ENCODE measurements at regions of chr3 and their contacts with region 1.

Region 1: GRCh38 chr3:150528354-150528797 is 17.9 kb downstream of the SERP1 start:
- DNase-seq: peak in 4 of 9 donors; percentile 23 to 37 (median 28)
- ATAC-seq: peak; percentile 42
- H3K4me3 ChIP-seq: no peak overlapping the region
- H3K4me3 Mint-ChIP-seq: no peak overlapping the region
- H3K27ac ChIP-seq: no peak overlapping the region
- H3K27ac Mint-ChIP-seq: no peak overlapping the region
- H3K4me1 ChIP-seq: no peaks in the 10 kb centered on the region
- H3K4me1 Mint-ChIP-seq: peaks cover 0 to 8% (median 5%) of the 10 kb centered on the region in 7 donors
- H3K27me3 ChIP-seq: no peaks in the 10 kb centered on the region
- H3K27me3 Mint-ChIP-seq: peaks cover 0 to 21% (median 0%) of the 10 kb centered on the region in 5 donors

Region 2: GRCh38 chr3:150582620-150583019 is 54.2 kb after region 1 on chr3:
- CTCF ChIA-PET with region 1: no interaction called
- POLR2A ChIA-PET with region 1: no interaction called
- intact Hi-C with region 1: no loop called
- DNase-seq: no peak
- ATAC-seq: no peak
- H3K4me3 ChIP-seq: no peak overlapping the region
- H3K4me3 Mint-ChIP-seq: peak overlapping the region in 1 of 10 donors; percentile 20
- H3K27ac ChIP-seq: no peak overlapping the region
- H3K27ac Mint-ChIP-seq: peak overlapping the region in 3 of 9 donors; percentile 5 to 38 (median 25)
- H3K4me1 ChIP-seq: no peaks in the 10 kb centered on the region
- H3K4me1 Mint-ChIP-seq: peaks cover 0 to 19% (median 0%) of the 10 kb centered on the region in 7 donors
- H3K27me3 ChIP-seq: no peaks in the 10 kb centered on the region
- H3K27me3 Mint-ChIP-seq: no peaks in the 10 kb centered on the region

Region 3: DNA sequence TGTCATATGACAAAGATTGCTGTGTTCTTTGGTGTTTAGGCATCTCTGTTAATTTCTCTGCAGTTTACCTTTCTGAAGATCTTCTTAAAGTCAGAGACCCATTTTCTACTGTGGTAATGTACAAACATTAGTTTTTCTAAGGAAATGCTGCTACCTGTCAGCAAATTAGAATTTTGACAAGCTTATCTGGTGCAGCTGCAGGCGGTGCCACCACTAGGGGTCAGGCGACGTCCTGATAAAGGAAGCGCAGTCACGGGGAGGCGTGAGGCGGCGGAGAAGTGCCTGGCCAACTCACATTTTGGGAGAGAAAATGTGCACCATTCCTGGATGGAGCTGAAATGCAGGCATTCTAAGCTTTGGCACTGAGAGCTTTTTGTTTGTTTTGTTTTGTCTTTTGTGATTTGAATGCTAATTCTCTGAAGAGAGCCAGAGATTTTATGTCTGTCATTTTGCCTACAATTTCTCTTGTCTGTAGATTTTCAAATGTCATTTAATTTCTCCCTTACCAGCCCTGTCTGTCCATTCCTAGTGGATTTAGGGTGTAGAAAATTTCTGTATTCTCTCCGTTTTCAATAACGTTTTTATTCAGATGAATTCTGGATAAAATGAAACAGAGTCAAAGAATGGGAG is 259.5 kb after region 1 on chr3:
- CTCF ChIA-PET with region 1: no interaction called
- POLR2A ChIA-PET with region 1: no interaction called
- intact Hi-C with region 1: loop called in 1 of 2 experiments (anchors 1 kb)
- DNase-seq: peak; percentile 45 to 77 (median 63)
- ATAC-seq: peak; percentile 92
- H3K4me3 ChIP-seq: no peak overlapping the region
- H3K4me3 Mint-ChIP-seq: peak overlapping the region in 2 of 10 donors; percentile 24 to 50
- H3K27ac ChIP-seq: no peak overlapping the region
- H3K27ac Mint-ChIP-seq: no peak overlapping the region
- H3K4me1 ChIP-seq: no peaks in the 10 kb centered on the region
- H3K4me1 Mint-ChIP-seq: peaks cover 0 to 22% (median 4%) of the 10 kb centered on the region in 7 donors
- H3K27me3 ChIP-seq: no peaks in the 10 kb centered on the region
- H3K27me3 Mint-ChIP-seq: peaks cover 0 to 9% (median 4%) of the 10 kb centered on the region in 5 donors